PC-3 (cell line): ENCODE measurements at regions of chr19 and their contacts with region 1.

Region 1: GRCh38 chr19:11639602-11640471 is 42.6 kb downstream of the ZNF627 start:
- DNase-seq: peak; percentile 99
- ATAC-seq: peak; percentile 97
- H3K4me3 ChIP-seq: peak overlapping the region; percentile 100
- H3K27ac ChIP-seq: peak overlapping the region; percentile 48
- H3K4me1 ChIP-seq: 0 out of 2 replicates have a peak, but pooled peaks cover 3% of the 10 kb centered on the region
- H3K27me3 ChIP-seq: no peaks in the 10 kb centered on the region
- CTCF ChIP-seq: no peak

Region 2: DNA sequence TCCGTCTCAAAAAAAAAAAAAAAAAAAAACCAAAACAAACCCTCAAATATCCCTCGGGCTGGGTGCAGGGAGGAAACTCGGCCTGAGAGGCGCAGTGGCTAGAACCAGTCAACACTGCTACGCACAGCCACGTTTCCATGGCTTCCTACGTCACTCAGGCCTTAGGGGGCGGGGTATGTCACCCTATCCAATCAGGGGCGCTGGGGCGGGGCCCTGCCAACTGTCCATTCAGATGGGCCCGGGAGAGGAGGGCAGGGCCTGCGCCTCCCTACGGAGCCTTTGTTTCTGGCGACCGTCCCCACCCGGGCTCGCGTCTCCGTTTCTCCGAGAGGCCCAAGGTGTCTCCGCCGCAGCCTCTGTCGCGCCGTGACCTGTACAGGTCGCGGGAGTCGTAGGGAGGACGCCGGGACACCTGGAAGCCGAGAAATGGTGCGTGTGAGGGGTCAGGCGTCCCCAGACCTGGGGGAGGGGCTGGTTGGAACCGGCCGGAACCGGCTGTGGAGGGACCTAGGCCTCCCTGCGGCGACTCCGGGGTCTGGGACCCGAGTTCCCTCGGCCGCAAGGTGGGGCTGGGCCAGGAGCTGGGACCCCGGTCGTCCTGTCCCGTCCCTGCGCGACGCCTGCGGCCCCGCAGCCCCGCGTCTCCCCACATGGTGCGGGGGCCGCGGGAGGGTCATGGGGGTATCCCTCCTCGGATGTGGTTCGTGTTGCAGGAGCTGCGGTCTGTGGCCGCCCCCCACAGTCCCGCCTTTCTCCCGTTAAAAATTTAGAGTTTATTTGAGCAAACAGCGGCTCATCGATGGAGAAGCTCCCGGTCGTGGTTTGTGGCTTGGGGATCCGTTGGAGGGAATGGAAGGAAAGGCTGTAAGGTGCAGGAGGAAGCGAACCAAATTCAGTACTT is 42.4 kb before region 1 on chr19 and contains the start of gene ZNF627:
- CTCF ChIA-PET with region 1: no interaction called
- POLR2A ChIA-PET with region 1: no interaction called
- intact Hi-C with region 1: loop called (anchors 1 kb)
- DNase-seq: peak; percentile 99
- ATAC-seq: peak; percentile 99
- H3K4me3 ChIP-seq: peak within 1 kb of the TSS; percentile 79
- H3K27ac ChIP-seq: peak within 1 kb of the TSS; percentile 29
- H3K4me1 ChIP-seq: peaks cover 6% of the 10 kb centered on the region
- H3K27me3 ChIP-seq: no peaks in the 10 kb centered on the region
- CTCF ChIP-seq: no peak
- total RNA-seq, gene ZNF627: 8.5 and 14.2 TPM in 2 replicates

Region 3: GRCh38 chr19:11624069-11624463 is 15.8 kb before region 1 on chr19:
- CTCF ChIA-PET with region 1: interaction called, 3 read pairs
- POLR2A ChIA-PET with region 1: no interaction called
- intact Hi-C with region 1: loop called (anchors 1 kb)
- DNase-seq: peak; percentile 61
- ATAC-seq: peak; percentile 65
- H3K4me3 ChIP-seq: peak overlapping the region; percentile 64
- H3K27ac ChIP-seq: no peak overlapping the region
- H3K4me1 ChIP-seq: peaks cover 28% of the 10 kb centered on the region
- H3K27me3 ChIP-seq: no peaks in the 10 kb centered on the region
- CTCF ChIP-seq: no peak